Endothelial cell of umbilical vein (primary cell): ENCODE measurements at regions of chr20 and their contacts with region 1.

Region 1: DNA sequence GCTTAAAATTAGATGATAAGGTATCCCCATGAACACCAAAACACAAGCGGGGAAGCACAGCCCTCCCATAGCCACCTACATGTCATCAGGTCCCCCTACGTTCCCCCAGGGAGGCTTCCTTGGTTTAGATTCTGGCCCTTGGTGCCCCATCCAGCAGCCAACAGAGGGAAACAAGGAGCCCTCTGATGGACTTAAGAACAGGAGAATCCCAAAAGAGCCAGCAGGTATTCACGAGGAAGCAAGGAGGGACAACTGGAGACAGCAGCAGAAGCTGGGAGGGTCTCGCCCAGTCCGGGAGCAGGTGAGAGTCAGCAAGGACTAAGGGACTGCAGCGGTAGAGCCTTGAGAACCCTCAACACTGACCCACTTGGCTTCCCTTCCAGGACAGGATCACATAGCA is 58.4 kb upstream of the TOP1 start:
- DNase-seq: no peak
- H3K4me3 ChIP-seq: no peak overlapping the region
- H3K27ac ChIP-seq: no peak overlapping the region
- H3K4me1 ChIP-seq: no peaks in the 10 kb centered on the region
- H3K27me3 ChIP-seq: no peaks in the 10 kb centered on the region
- CTCF ChIP-seq: peak in 1 of 2 donors; percentile 16
- POLR2A ChIP-seq: no peak

Region 2: GRCh38 chr20:40931410-40932044 is 38.7 kb before region 1 on chr20:
- CTCF ChIA-PET with region 1: no interaction called
- POLR2A ChIA-PET with region 1: no interaction called
- dilution Hi-C with region 1: no loop called
- intact Hi-C with region 1: no loop called
- DNase-seq: no peak
- H3K4me3 ChIP-seq: no peak overlapping the region
- H3K27ac ChIP-seq: no peak overlapping the region
- H3K4me1 ChIP-seq: no peaks in the 10 kb centered on the region
- H3K27me3 ChIP-seq: no peaks in the 10 kb centered on the region
- CTCF ChIP-seq: no peak
- POLR2A ChIP-seq: no peak

Region 3: DNA sequence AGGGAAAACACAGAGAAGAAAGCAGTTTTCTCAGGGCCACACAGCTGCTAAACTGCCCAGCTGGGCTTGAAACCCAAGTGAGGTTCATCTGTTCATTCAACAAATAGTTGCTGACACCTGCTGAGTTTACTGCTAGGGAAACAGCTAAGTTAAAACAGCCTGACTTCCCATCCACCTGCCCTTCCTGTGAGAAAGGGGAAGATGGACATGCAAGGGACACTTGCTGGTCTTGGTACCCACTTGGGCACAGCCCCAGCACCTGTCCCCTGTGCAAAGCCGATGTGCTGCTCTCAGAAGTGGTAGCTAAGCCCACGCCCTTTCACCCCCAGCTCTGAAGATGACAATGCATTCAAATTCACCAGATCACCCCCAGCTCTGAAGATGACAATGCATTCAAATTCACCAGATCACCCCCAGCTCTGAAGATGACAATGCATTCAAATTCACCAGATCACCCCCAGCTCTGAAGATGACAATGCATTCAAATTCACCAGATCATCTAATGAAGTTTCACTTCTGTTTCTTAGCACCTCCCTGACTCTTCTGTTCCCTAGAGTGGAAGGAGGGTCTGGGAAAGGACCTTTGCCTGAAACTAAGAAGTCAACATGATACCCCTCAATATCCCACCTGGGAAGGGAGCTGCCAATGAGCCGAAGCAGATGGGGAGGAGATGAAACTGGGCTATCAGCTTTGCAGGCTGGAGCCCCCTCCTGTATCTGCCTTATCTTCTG is 12.4 kb after region 1 on chr20:
- CTCF ChIA-PET with region 1: interaction called, 11 read pairs
- POLR2A ChIA-PET with region 1: no interaction called
- dilution Hi-C with region 1: no loop called
- intact Hi-C with region 1: no loop called
- DNase-seq: no peak
- H3K4me3 ChIP-seq: no peak overlapping the region
- H3K27ac ChIP-seq: no peak overlapping the region
- H3K4me1 ChIP-seq: no peaks in the 10 kb centered on the region
- H3K27me3 ChIP-seq: no peaks in the 10 kb centered on the region
- CTCF ChIP-seq: no peak
- POLR2A ChIP-seq: no peak

Region 4: GRCh38 chr20:41078329-41078728 is 108.1 kb after region 1 on chr20:
- CTCF ChIA-PET with region 1: interaction called, 4 read pairs
- POLR2A ChIA-PET with region 1: no interaction called
- dilution Hi-C with region 1: no loop called
- intact Hi-C with region 1: loop called (anchors 1 kb)
- DNase-seq: peak; percentile 86
- H3K4me3 ChIP-seq: no peak overlapping the region
- H3K27ac ChIP-seq: no peak overlapping the region
- H3K4me1 ChIP-seq: peaks cover 64% of the 10 kb centered on the region
- H3K27me3 ChIP-seq: no peaks in the 10 kb centered on the region
- CTCF ChIP-seq: peak; percentile 49 to 52
- POLR2A ChIP-seq: peak; percentile 52

Region 5: GRCh38 chr20:41095110-41095969 is 125.1 kb after region 1 on chr20:
- CTCF ChIA-PET with region 1: interaction called, 106 read pairs
- POLR2A ChIA-PET with region 1: interaction called, 3 read pairs
- dilution Hi-C with region 1: no loop called
- intact Hi-C with region 1: loop called (anchors 1 kb)
- DNase-seq: peak; percentile 71
- H3K4me3 ChIP-seq: no peak overlapping the region
- H3K27ac ChIP-seq: no peak overlapping the region
- H3K4me1 ChIP-seq: peaks cover 14% of the 10 kb centered on the region
- H3K27me3 ChIP-seq: no peaks in the 10 kb centered on the region
- CTCF ChIP-seq: peak; percentile 67 to 75
- POLR2A ChIP-seq: no peak

Region 6: DNA sequence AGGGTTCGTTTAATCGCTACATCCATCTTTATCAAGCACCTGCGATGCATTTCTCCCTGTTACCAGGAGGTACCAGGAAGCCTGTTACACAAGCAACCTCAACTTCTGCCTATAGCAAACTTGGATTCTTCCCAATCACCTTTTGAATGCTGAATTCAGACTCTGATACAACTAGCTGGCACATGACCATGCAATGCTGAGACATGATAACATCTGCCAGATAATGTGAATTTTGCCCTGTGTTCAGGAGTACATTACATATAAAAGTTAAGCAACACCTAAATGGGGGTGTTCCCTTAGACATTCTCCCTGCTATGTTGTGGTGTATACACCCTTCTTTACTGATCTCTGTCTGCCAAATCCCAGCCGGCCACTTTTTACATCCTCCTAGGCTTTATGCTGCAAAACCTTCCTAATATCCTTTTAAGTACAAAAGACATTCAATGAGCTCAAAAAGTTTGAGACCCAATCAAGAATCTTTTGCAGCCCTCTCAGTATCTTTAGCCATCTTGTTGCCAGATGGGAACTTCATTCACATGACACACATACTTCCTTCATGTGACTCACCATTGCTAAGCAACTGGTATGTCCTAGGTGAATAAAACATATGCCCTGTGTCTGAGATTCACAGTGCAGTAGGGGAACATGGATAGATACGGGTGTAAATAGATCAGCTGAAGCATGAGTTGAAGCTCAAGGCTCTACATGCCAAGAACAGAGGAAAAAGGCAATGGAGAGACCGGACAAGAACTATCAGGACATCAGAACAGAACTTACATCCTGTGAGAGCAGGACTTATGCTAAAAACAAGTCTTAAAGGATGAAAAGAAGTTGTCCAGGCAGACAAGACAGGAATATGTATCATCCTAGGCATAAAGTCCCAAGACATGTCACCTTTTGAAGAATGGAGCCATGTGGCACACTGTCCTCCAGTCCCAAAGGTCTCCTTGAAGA is 263.0 kb after region 1 on chr20:
- CTCF ChIA-PET with region 1: interaction called, 5 read pairs
- POLR2A ChIA-PET with region 1: no interaction called
- dilution Hi-C with region 1: no loop called
- intact Hi-C with region 1: loop called (anchors 1 kb)
- DNase-seq: peak; percentile 59
- H3K4me3 ChIP-seq: no peak overlapping the region
- H3K27ac ChIP-seq: peak overlapping the region; percentile 40
- H3K4me1 ChIP-seq: peaks cover 17% of the 10 kb centered on the region
- H3K27me3 ChIP-seq: no peaks in the 10 kb centered on the region
- CTCF ChIP-seq: no peak
- POLR2A ChIP-seq: no peak

Region 7: GRCh38 chr20:41411391-41411847 is 441.2 kb after region 1 on chr20:
- CTCF ChIA-PET with region 1: no interaction called
- POLR2A ChIA-PET with region 1: no interaction called
- dilution Hi-C with region 1: no loop called
- intact Hi-C with region 1: loop called (anchors 1 kb)
- DNase-seq: peak; percentile 48
- H3K4me3 ChIP-seq: no peak overlapping the region
- H3K27ac ChIP-seq: no peak overlapping the region
- H3K4me1 ChIP-seq: no peaks in the 10 kb centered on the region
- H3K27me3 ChIP-seq: no peaks in the 10 kb centered on the region
- CTCF ChIP-seq: peak; percentile 12 to 19
- POLR2A ChIP-seq: no peak